ENCODE measurements at regions of chr4 and their contacts with region 1.

Region 1: DNA sequence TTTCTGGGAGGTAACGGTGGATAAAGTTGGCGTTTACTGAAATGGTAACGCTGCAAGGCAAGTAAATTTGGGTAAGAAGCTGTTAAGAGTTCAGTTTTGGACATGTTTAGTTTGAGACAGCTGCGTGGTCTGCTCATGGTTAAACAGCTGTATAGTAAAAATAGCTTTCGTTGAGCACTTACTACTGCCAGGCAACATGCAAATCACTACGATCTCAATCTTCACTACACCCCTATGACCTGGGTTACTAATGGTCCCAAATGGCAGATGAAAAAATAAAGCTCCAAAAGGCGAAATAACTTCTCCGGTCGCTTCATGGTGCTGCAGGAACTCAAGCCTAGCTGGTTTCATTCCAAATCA is 22.2 kb downstream of the FABP2 start:
- DNase-seq: no peak
- H3K4me3 ChIP-seq: peak overlapping the region; percentile 47
- H3K27ac ChIP-seq: peak overlapping the region; percentile 62 to 87
- H3K4me1 ChIP-seq: peaks cover 6% of the 10 kb centered on the region
- H3K27me3 ChIP-seq: no peaks in the 10 kb centered on the region
- CTCF ChIP-seq: no peak
- EP300 ChIP-seq: no peak
- POLR2A ChIP-seq: no peak

Region 2: GRCh38 chr4:118729287-118730286 is 570.1 kb before region 1 on chr4:
- intact Hi-C with region 1: loop called in 1 of 4 experiments (anchors 10 kb)
- DNase-seq: no peak
- H3K4me3 ChIP-seq: no peak overlapping the region
- H3K27ac ChIP-seq: no peak overlapping the region
- H3K4me1 ChIP-seq: no peaks in the 10 kb centered on the region
- H3K27me3 ChIP-seq: no peaks in the 10 kb centered on the region
- CTCF ChIP-seq: no peak
- EP300 ChIP-seq: no peak
- POLR2A ChIP-seq: no peak

Measured in ovary (tissue), 10 donors.